ENCODE measurements at regions of chr2 and their contacts with region 1.

Region 1: GRCh38 chr2:69914170-69914960 is 544 bp upstream of the MXD1 start:
- DNase-seq: peak; percentile 100
- H3K4me3 ChIP-seq: peak overlapping the region; percentile 87
- H3K27ac ChIP-seq: peak overlapping the region; percentile 93
- H3K4me1 ChIP-seq: no peaks in the 10 kb centered on the region
- H3K27me3 ChIP-seq: no peaks in the 10 kb centered on the region
- CTCF ChIP-seq: no peak

Region 2: GRCh38 chr2:69858261-69858660 is 56.1 kb before region 1 on chr2:
- intact Hi-C with region 1: no loop called
- DNase-seq: no peak
- H3K4me3 ChIP-seq: no peak overlapping the region
- H3K27ac ChIP-seq: no peak overlapping the region
- H3K4me1 ChIP-seq: no peaks in the 10 kb centered on the region
- H3K27me3 ChIP-seq: no peaks in the 10 kb centered on the region
- CTCF ChIP-seq: no peak

Region 3: DNA sequence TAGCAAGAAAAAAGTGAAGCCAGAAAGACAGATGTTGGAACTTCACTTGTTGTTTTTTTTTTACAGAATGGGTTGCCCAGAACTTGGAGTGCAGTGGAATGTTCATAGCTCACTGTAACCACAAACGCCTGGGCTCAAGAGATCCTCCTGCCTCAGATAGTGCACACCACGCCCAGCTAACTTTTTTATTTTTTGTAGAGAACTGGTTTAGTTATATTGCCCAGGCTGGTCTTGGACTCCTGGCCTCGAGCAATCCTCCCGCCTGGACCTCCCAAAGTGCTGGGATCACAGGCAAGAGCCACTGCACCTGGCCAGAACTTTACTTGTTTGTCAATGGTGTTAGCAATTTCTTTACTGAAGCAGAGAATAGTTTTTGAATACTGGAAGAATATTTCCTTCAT is 59.0 kb after region 1 on chr2:
- intact Hi-C with region 1: no loop called
- DNase-seq: no peak
- H3K4me3 ChIP-seq: no peak overlapping the region
- H3K27ac ChIP-seq: no peak overlapping the region
- H3K4me1 ChIP-seq: no peaks in the 10 kb centered on the region
- H3K27me3 ChIP-seq: no peaks in the 10 kb centered on the region
- CTCF ChIP-seq: no peak

Region 4: GRCh38 chr2:70070541-70071268 is 156.3 kb after region 1 on chr2:
- intact Hi-C with region 1: loop called (anchors 5 kb)
- DNase-seq: peak; percentile 77
- H3K4me3 ChIP-seq: no peak overlapping the region
- H3K27ac ChIP-seq: peak overlapping the region; percentile 72
- H3K4me1 ChIP-seq: peaks cover 3% of the 10 kb centered on the region
- H3K27me3 ChIP-seq: no peaks in the 10 kb centered on the region
- CTCF ChIP-seq: peak; percentile 87

Region 5: DNA sequence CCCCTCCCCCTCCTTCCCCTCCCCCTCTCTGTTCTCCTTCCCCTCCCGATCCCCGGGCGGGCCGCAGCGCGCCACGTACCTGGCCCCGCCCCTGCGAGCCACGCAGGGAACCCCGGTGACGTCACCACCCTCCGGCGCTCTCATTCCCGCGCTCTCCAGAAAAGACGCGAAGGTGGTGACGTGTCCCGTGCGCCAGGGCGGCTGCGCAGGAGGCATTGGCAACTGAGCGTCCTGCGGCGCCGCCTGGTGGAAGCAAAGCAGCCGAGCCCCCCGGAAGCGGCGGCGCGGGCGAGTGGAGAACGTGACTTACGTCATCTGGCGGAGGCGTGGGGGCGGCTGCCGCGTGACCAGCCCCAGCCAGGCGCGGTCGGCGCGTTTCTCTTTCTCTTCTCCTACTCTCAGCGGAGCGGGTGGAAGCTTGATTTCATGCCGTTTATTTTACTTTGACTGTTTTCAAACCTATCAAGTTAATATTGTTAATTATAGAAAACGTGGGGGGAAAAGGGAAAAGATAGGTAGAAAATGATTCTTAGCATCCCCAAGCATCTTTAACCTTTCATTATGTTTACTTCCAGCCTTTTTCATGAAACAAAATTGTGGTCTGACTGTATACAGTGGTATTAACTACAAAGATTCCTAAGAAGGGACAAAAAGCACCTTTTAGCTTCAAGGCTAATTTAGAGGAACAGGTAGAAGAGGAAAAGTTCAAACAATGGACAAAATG is 228.4 kb after region 1 on chr2:
- intact Hi-C with region 1: loop called (anchors 2 kb)
- DNase-seq: peak; percentile 99
- H3K4me3 ChIP-seq: peak overlapping the region; percentile 51
- H3K27ac ChIP-seq: peak overlapping the region; percentile 98
- H3K4me1 ChIP-seq: peaks cover 6% of the 10 kb centered on the region
- H3K27me3 ChIP-seq: no peaks in the 10 kb centered on the region
- CTCF ChIP-seq: peak; percentile 84

Region 6: DNA sequence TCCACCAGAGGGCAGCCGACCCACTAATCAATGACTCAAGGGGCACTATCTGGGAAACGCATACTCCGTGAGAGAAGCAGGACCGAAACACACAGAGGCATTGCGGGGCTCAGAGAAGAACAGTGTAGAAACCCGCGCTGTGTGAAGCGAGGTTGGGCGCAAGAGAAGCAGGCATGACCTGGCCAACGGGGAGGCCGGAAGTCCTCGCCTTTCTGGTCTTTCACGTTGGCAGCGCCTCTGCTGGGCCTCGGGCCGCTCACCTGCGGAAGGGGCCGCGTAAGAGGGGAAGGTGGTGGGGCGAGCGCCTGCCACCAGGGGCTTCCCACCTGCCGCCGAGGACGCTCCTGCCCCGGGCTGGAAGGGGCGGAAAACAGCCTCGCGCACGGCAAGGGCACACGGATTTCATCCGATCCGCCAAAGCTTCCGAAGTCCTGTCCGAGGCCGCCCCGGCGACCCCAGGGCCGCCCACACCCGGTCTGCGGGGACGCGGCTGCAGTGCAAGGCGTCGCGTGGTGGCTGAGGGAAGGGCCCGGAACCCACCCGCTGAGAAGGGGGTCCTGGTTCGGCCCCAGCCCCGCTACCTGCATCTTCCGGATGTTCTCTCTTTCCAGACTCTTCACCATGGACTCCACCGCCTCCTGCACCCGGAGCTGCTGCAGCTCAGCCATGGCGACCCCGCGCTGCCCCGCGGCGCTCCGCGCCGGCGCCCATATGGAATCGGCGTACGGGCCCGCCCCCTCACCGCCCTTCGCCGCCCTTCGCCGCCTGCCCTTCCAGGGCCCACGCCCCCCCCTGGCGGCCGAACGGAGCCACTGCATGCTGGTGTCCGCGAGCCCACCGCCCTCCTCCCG is 387.2 kb after region 1 on chr2 and contains the start of gene FAM136A:
- intact Hi-C with region 1: loop called (anchors 5 kb)
- DNase-seq: peak; percentile 86
- H3K4me3 ChIP-seq: peak within 1 kb of the TSS; percentile 97
- H3K27ac ChIP-seq: peak within 1 kb of the TSS; percentile 90
- H3K4me1 ChIP-seq: peaks cover 4% of the 10 kb centered on the region
- H3K27me3 ChIP-seq: no peaks in the 10 kb centered on the region
- CTCF ChIP-seq: peak; percentile 97
- total RNA-seq, gene FAM136A: 44.0 to 48.4 TPM

Measured in colonic mucosa (tissue), 4 donors.